Activated CD4-positive, alpha-beta T cell treated with anti-CD3 and anti-CD28 coated beads for 36 hours (primary cell): ENCODE measurements at regions of chr20 and their contacts with region 1.

Region 1: GRCh38 chr20:50980851-50981713 is 22.5 kb downstream of the MOCS3 start:
- DNase-seq: peak; percentile 84
- ATAC-seq: no peak
- H3K4me3 Mint-ChIP-seq: no peak overlapping the region
- H3K27ac Mint-ChIP-seq: peak overlapping the region; percentile 90
- H3K4me1 Mint-ChIP-seq: peaks cover 20% of the 10 kb centered on the region
- H3K27me3 Mint-ChIP-seq: peaks cover 26% of the 10 kb centered on the region

Region 2: GRCh38 chr20:50772420-50773185 is 208.5 kb before region 1 on chr20:
- CTCF ChIA-PET with region 1: no interaction called
- POLR2A ChIA-PET with region 1: no interaction called
- intact Hi-C with region 1: no loop called
- DNase-seq: no peak
- ATAC-seq: peak; percentile 23
- H3K4me3 Mint-ChIP-seq: no peak overlapping the region
- H3K27ac Mint-ChIP-seq: no peak overlapping the region
- H3K4me1 Mint-ChIP-seq: peaks cover 2% of the 10 kb centered on the region
- H3K27me3 Mint-ChIP-seq: no peaks in the 10 kb centered on the region

Region 3: DNA sequence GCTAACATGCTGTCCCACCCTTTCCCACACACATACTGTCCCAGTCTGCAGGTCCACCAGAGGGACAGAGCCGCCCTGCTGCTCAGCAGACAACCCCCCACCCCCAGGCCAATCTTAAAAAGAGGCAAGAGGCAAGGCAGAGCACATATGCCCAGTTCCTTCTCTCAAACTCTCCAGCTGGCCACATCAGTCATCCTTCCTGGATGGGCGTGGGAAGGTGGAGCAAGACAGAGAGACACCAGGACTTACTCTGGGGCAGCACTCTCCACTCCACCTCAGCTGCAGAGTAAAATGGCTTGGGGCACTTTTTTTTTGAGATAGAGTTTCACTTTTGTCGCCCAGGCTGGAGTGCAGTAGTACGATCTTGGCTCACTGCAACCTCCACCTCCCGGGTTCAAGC is 11.6 kb before region 1 on chr20:
- CTCF ChIA-PET with region 1: interaction called, 10 read pairs
- POLR2A ChIA-PET with region 1: no interaction called
- intact Hi-C with region 1: no loop called
- DNase-seq: no peak
- ATAC-seq: no peak
- H3K4me3 Mint-ChIP-seq: no peak overlapping the region
- H3K27ac Mint-ChIP-seq: no peak overlapping the region
- H3K4me1 Mint-ChIP-seq: no peaks in the 10 kb centered on the region
- H3K27me3 Mint-ChIP-seq: no peaks in the 10 kb centered on the region

Region 4: GRCh38 chr20:51326201-51326819 is 345.2 kb after region 1 on chr20:
- CTCF ChIA-PET with region 1: interaction called, 126 read pairs
- POLR2A ChIA-PET with region 1: no interaction called
- intact Hi-C with region 1: no loop called
- DNase-seq: peak; percentile 78
- ATAC-seq: peak; percentile 36
- H3K4me3 Mint-ChIP-seq: no peak overlapping the region
- H3K27ac Mint-ChIP-seq: no peak overlapping the region
- H3K4me1 Mint-ChIP-seq: no peaks in the 10 kb centered on the region
- H3K27me3 Mint-ChIP-seq: peaks cover 2% of the 10 kb centered on the region

Region 5: GRCh38 chr20:51487565-51488268 is 506.6 kb after region 1 on chr20:
- CTCF ChIA-PET with region 1: no interaction called
- POLR2A ChIA-PET with region 1: no interaction called
- intact Hi-C with region 1: no loop called
- DNase-seq: peak; percentile 43
- ATAC-seq: no peak
- H3K4me3 Mint-ChIP-seq: no peak overlapping the region
- H3K27ac Mint-ChIP-seq: peak overlapping the region; percentile 53
- H3K4me1 Mint-ChIP-seq: peaks cover 93% of the 10 kb centered on the region
- H3K27me3 Mint-ChIP-seq: no peaks in the 10 kb centered on the region